ENCODE measurements at regions of chr15 and their contacts with region 1.

Region 1: GRCh38 chr15:78565097-78565951 is at the start of gene CHRNA5:
- DNase-seq: peak; percentile 10 to 80 (median 64)
- ATAC-seq: peak; percentile 70
- H3K4me3 ChIP-seq: peak within 1 kb of the TSS; percentile 70 to 71
- H3K4me3 Mint-ChIP-seq: peak within 1 kb of the TSS; percentile 85
- H3K27ac ChIP-seq: peak within 1 kb of the TSS in 1 of 2 experiments; percentile 46
- H3K27ac Mint-ChIP-seq: no peak within 1 kb of the TSS
- H3K4me1 ChIP-seq: peaks cover 17% of the 10 kb centered on the region
- H3K4me1 Mint-ChIP-seq: peaks cover 22% of the 10 kb centered on the region
- H3K27me3 ChIP-seq: no peaks in the 10 kb centered on the region
- H3K27me3 Mint-ChIP-seq: peaks cover 38% of the 10 kb centered on the region
- CTCF ChIP-seq: no peak
- total RNA-seq, gene CHRNA5: 0.56 TPM in 1 of 2 experiments, not detected in the other

Region 2: DNA sequence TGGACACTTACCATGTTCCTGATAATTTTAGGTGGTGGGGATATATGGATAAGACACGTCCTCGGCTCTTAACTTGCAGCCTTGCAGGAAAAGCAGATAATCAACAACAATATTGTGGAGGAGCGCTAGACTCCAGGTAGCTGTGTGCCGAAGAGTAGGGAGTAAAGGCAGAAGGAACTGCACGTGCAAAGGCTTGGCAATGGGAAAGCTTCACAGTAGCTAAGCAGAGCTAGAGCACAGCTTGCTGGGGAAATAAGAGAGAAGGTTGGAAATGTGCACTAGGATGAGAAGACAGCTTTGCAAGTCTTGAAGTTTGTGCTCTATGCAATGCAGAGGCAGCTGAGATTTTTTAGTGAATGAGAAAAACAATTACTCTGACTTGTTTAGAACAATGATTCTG is 12.7 kb before region 1 on chr15:
- CTCF ChIA-PET with region 1: interaction called, 3 read pairs
- POLR2A ChIA-PET with region 1: interaction called, 11 read pairs
- intact Hi-C with region 1: no loop called
- DNase-seq: no peak
- ATAC-seq: no peak
- H3K4me3 ChIP-seq: no peak overlapping the region
- H3K4me3 Mint-ChIP-seq: no peak overlapping the region
- H3K27ac ChIP-seq: no peak overlapping the region
- H3K27ac Mint-ChIP-seq: no peak overlapping the region
- H3K4me1 ChIP-seq: no peaks in the 10 kb centered on the region
- H3K4me1 Mint-ChIP-seq: no peaks in the 10 kb centered on the region
- H3K27me3 ChIP-seq: no peaks in the 10 kb centered on the region
- H3K27me3 Mint-ChIP-seq: no peaks in the 10 kb centered on the region
- CTCF ChIP-seq: no peak

Measured in CD8-positive, alpha-beta T cell (primary cell).